Colonic mucosa (tissue), 4 donors: ENCODE measurements at regions of chr16 and their contacts with region 1.

Region 1: DNA sequence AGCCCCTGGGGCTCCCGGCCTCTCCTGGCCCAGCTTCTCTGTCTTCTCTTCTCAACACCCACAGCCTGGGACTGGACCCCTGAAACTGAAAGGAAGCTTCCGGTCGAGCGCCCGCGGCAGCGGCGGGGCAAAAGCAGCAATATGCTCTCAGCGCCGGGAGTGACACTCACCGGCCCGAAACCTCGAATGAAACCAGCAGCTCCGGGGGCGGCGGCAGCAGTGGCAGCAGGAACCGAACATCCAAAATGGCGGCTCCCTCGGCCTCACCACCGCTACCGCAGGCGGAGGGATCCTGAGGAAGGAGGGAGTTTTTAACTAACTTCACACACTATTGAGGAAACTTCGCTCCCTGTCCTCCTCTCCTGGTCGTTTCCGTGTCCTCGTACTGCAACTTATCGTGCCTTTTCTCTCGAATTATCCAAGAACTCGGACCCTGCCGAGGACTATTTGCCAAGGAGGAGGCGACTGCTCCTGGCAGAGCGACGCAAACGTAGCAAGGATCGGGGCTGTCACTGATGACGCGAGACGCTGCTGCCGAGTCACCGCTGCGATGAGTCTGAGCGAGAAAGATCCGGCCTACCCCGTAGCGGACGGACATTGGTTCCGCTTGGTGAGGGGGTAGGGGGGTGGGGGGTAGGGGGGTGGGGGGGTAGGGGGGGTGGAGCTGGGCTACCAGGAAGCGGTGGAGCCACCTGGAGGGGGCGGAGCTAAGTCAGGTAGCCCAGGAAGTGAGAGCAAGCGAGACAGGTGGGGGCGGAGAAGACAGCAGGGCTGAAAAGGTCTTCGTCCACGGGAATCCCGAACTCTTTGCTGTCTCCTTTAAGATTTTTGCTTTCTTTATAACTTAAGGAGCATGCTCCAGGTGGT is at the start of gene AP1G1:
- DNase-seq: peak; percentile 95
- H3K4me3 ChIP-seq: peak within 1 kb of the TSS; percentile 84
- H3K27ac ChIP-seq: peak within 1 kb of the TSS; percentile 89
- H3K4me1 ChIP-seq: peaks cover 9% of the 10 kb centered on the region
- H3K27me3 ChIP-seq: no peaks in the 10 kb centered on the region
- CTCF ChIP-seq: no peak
- total RNA-seq, gene AP1G1: 101 to 102 TPM

Region 2: DNA sequence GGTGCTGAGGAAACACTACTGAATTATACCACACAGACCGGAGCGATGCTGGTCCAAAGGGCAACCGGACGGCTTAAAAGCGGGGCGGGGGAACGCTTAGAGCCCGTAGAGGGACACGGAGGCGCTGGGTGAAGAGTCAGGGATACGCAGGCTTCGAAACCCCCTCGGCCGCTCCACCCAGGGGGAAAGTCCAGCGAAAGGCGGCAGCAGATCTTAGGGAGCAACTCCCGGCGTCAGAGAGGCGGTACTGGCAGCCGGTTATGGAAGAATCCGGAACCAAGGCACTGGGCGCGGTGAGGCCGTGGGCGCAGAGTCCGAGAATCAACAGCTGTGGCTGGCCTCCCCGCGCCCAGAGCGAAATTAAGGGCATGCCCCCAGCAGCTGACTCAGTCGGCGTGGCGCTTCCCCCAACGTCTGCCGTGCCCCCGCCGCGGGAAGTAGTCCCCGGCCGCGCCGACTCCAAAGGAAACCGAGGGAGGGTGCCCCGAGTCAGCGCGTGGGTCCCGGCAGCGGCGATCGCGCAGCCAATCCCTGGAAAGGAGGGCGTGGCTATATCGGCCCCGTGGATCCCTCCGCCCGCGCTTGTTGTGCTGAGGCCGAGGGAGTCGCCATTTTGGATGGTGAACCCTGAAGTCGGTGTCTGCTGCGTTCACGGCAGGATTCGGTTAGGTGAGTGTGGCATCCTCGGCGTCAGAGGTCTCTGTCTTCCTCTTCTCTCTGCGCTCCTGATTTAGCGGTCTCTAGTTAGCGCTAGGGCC is 86.3 kb after region 1 on chr16 and contains the start of gene IST1:
- intact Hi-C with region 1: loop called (anchors 2 kb)
- DNase-seq: peak; percentile 97
- H3K4me3 ChIP-seq: peak within 1 kb of the TSS; percentile 83
- H3K27ac ChIP-seq: peak within 1 kb of the TSS; percentile 98
- H3K4me1 ChIP-seq: peaks cover 16% of the 10 kb centered on the region
- H3K27me3 ChIP-seq: no peaks in the 10 kb centered on the region
- CTCF ChIP-seq: no peak
- total RNA-seq, gene IST1: 180 to 304 TPM